Ascending aorta (tissue), 2 donors: ENCODE measurements at regions of chr13 and their contacts with region 1.

Region 1: GRCh38 chr13:44435142-44435982 is 61.7 kb downstream of the SERP2 start:
- DNase-seq: peak; percentile 93 to 99
- H3K4me3 ChIP-seq: peak overlapping the region; percentile 67 to 80
- H3K27ac ChIP-seq: peak overlapping the region; percentile 83 to 92
- H3K4me1 ChIP-seq: peaks cover 0 to 16% of the 10 kb centered on the region in 2 donors
- H3K27me3 ChIP-seq: no peaks in the 10 kb centered on the region
- CTCF ChIP-seq: no peak

Region 2: DNA sequence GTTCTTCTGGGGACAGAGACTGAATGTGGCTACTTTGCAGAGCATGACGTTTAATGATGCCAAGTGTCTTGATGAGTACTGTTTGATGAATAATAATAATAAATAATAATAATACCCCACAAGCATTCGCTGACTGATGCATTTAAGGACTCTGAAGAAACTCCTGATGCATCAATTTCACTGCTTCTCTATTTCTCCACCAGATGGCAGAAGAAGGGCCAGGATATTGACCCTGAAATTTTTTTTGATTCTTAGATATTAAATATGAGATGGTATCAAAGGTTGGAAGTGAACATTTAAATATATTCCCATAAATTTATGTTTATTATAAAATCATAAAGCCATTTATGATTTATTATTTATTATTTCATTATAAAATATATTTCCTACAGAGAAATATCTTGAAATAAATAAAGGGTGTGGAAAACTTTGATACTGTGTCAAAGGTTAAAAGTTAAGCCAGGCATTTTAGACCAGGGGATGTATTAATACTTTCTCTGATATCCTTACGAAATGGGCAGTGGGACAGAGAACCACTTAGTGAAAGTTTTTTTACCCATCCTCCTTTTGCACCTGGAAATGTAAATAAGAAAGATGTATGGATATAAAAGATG is 384.8 kb before region 1 on chr13:
- intact Hi-C with region 1: loop called (anchors 1 kb)
- DNase-seq: no peak
- H3K4me3 ChIP-seq: no peak overlapping the region
- H3K27ac ChIP-seq: no peak overlapping the region
- H3K4me1 ChIP-seq: peaks cover 0 to 24% of the 10 kb centered on the region in 2 donors
- H3K27me3 ChIP-seq: no peaks in the 10 kb centered on the region
- CTCF ChIP-seq: peak; percentile 50 to 80 (median 78)

Region 3: DNA sequence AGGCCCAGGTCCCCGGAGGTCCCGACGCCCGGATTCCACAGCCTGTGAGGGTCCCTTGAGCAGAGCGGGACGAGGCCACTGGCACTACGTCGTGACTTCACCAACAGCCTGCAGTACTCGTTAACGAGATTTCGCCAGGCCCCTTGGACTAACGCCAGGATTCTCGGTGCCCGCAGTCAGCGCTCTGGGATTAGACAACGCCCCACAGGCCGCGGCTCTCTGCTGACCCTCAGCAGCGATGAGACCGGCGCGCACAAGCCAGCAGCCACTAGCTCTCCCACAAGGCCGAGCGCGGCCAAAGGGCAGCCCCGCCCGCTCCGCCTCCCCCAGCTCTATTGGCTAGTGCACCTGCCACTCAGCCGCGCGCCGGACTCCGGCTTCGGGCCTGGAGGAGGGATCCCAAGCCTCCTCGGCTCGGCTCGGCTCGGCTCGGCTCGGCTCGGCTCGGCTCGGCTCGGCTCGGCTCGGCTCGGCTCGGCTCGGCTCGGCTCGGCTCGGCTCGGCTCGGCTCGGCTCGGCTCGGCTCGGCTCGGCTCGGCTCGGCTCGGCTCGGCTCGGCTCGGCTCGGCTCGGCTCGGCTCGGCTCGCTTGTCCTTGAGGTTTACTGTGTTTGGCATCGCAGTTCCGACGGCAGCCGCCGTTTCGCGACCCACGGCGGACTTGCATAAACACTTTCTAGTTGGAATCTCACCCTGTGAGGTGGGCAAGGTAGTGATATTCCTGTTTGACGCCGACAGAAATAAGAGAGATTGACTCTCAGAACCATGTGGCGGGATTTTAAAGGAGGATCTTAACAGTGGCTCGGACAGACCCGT is 293.4 kb before region 1 on chr13:
- intact Hi-C with region 1: loop called (anchors 1 kb)
- DNase-seq: peak; percentile 93 to 99
- H3K4me3 ChIP-seq: peak overlapping the region; percentile 68 to 72
- H3K27ac ChIP-seq: peak overlapping the region; percentile 95 to 96
- H3K4me1 ChIP-seq: peaks cover 3 to 8% of the 10 kb centered on the region in 2 donors
- H3K27me3 ChIP-seq: no peaks in the 10 kb centered on the region
- CTCF ChIP-seq: no peak

Region 4: GRCh38 chr13:44218501-44219240 is 216.7 kb before region 1 on chr13:
- intact Hi-C with region 1: loop called (anchors 1 kb)
- DNase-seq: peak; percentile 37 to 90
- H3K4me3 ChIP-seq: no peak overlapping the region
- H3K27ac ChIP-seq: peak overlapping the region; percentile 68 to 78
- H3K4me1 ChIP-seq: peaks cover 10 to 33% of the 10 kb centered on the region in 2 donors
- H3K27me3 ChIP-seq: no peaks in the 10 kb centered on the region
- CTCF ChIP-seq: no peak

Region 5: DNA sequence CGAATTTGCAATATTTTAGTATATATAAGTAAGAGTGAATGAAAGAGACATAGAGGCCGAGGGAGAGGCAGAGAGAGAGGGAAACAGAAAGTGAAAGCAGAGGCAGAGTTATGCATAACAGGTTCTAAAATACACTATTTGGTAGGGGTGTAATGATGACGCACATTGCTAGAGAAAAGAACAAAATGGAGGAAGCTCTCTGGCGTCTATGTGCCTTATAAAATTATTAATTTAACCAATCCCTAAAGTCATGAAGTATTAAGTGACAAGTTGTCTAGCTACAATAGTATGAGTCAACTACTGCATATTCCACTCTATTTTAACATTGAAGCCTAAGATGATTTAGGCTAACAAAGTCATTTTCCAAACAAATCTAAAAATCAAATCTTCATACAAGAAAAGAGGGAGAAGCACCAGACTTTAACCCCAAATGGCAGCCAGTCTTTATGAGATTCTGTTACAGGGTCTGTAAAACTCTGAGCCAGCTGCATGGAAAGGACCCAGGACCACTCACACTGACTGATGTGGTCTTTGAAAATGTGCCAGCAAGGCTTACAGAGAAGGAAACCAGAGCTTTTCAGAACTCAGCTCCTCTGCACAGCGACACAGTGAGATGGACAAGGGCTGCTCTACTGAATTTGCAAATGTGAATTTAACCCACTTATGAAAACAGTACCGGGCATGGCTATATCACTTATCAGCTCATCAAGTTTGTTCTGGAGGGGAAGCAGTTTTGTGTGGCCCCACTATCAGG is 160.7 kb before region 1 on chr13:
- intact Hi-C with region 1: loop called (anchors 10 kb)
- DNase-seq: no peak
- H3K4me3 ChIP-seq: peak overlapping the region; percentile 44 to 55
- H3K27ac ChIP-seq: peak overlapping the region; percentile 88 to 92
- H3K4me1 ChIP-seq: peaks cover 9 to 45% of the 10 kb centered on the region in 2 donors
- H3K27me3 ChIP-seq: no peaks in the 10 kb centered on the region
- CTCF ChIP-seq: no peak

Region 6: GRCh38 chr13:44364348-44365049 is 70.9 kb before region 1 on chr13:
- intact Hi-C with region 1: loop called (anchors 1 kb)
- DNase-seq: no peak
- H3K4me3 ChIP-seq: no peak overlapping the region
- H3K27ac ChIP-seq: no peak overlapping the region
- H3K4me1 ChIP-seq: peaks cover 0 to 8% of the 10 kb centered on the region in 2 donors
- H3K27me3 ChIP-seq: no peaks in the 10 kb centered on the region
- CTCF ChIP-seq: no peak